Sigmoid colon (tissue), 7 donors: ENCODE measurements at regions of chr16 and their contacts with region 1.

Region 1: DNA sequence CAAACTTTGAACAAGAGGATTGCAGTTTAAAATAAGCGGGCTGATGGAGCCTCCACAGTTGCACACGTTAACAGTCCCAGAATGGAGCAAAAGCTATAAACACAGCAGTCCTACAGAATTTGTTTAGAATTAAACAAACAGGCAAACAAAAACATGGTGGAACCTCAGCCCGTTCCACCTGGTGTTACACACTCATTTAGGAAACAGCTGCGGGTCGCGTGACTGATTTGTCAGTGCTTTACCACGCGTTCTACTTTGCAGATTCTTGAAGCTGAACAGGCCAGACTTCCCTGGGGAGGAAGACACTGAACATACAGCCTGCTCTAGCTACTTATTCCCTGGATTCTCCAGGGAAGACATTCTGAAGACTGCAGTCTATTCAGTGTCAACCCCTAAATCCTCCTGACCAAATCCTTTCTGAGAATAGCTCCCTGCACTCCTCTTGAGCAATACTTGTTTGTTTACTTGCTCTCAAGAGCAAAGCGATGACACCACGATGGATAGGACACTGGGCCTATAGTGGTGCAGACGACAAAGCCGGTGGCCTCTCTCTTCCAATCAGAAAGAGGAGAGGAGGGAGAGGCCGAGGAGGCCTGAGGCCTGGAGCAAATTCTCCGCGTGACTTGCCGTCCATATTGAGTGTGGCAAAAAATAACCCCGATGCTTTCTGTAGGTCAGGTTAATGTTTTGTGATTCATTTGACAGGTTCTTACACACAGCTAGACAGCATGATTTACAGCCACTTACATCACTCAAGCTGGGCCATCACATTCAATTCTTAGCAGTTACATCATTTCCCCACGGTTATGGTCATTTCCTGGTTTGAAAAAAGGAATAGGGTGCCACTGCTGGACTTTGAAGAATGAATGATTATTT is 4.0 kb upstream of the MAP1LC3B start:
- DNase-seq: peak; percentile 98
- H3K4me3 ChIP-seq: peak overlapping the region in 2 of 4 donors; percentile 13 to 18
- H3K27ac ChIP-seq: peak overlapping the region; percentile 88 to 100 (median 95)
- H3K4me1 ChIP-seq: peaks cover 0 to 44% (median 36%) of the 10 kb centered on the region in 4 donors
- H3K27me3 ChIP-seq: no peaks in the 10 kb centered on the region
- CTCF ChIP-seq: no peak
- EP300 ChIP-seq: peak in 3 of 4 donors; percentile 65 to 81 (median 69)
- POLR2A ChIP-seq: peak; percentile 9 to 44

Region 2: GRCh38 chr16:86554917-86555703 is 833.1 kb before region 1 on chr16 and contains the start of gene MTHFSD:
- intact Hi-C with region 1: loop called (anchors 10 kb)
- DNase-seq: peak; percentile 96
- H3K4me3 ChIP-seq: peak within 1 kb of the TSS; percentile 69 to 85 (median 70)
- H3K27ac ChIP-seq: peak within 1 kb of the TSS; percentile 84 to 86 (median 84)
- H3K4me1 ChIP-seq: peaks cover 2 to 22% (median 13%) of the 10 kb centered on the region in 4 donors
- H3K27me3 ChIP-seq: peaks cover 0 to 17% (median 8%) of the 10 kb centered on the region in 3 donors
- CTCF ChIP-seq: no peak
- EP300 ChIP-seq: peak in 1 of 4 donors; percentile 58
- POLR2A ChIP-seq: peak; percentile 58
- total RNA-seq, gene MTHFSD: 10.7 to 18.8 (median 11.9) TPM

Region 3: DNA sequence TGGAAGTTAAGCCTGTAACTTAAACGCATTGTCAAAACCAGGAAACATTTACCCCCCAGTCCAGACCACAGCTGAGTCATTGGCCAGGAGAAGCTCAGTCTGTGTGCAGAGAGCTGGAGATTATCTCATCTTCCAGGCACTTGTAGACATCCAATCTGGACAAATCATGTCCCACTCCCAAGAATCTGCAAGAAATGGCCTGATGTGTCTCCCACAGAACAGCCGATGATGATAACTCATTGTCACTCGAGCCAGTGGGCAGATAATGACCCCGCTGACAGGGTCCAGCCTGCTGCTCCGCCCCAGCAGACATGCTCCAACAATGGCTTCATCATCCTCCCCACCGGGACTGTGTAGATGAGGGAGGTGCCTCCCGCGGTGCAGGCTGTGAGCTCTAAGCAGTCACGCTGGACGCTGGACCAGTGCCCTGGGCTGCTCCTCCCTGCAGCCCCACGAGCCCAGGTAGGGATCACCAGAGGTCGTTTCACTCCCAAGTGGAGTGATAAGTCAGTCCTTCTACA is 393.5 kb before region 1 on chr16:
- intact Hi-C with region 1: no loop called
- DNase-seq: peak; percentile 45
- H3K4me3 ChIP-seq: no peak overlapping the region
- H3K27ac ChIP-seq: no peak overlapping the region
- H3K4me1 ChIP-seq: no peaks in the 10 kb centered on the region
- H3K27me3 ChIP-seq: peaks cover 3 to 80% (median 38%) of the 10 kb centered on the region in 3 donors
- CTCF ChIP-seq: no peak
- EP300 ChIP-seq: no peak
- POLR2A ChIP-seq: no peak

Region 4: GRCh38 chr16:87288753-87289362 is 99.3 kb before region 1 on chr16:
- intact Hi-C with region 1: no loop called
- DNase-seq: no peak
- H3K4me3 ChIP-seq: no peak overlapping the region
- H3K27ac ChIP-seq: no peak overlapping the region
- H3K4me1 ChIP-seq: no peaks in the 10 kb centered on the region
- H3K27me3 ChIP-seq: no peaks in the 10 kb centered on the region
- CTCF ChIP-seq: no peak
- EP300 ChIP-seq: no peak
- POLR2A ChIP-seq: no peak

Region 5: GRCh38 chr16:87461466-87461991 is 73.3 kb after region 1 on chr16:
- intact Hi-C with region 1: loop called (anchors 5 kb)
- DNase-seq: peak; percentile 81
- H3K4me3 ChIP-seq: no peak overlapping the region
- H3K27ac ChIP-seq: peak overlapping the region in 3 of 4 donors; percentile 25 to 43 (median 30)
- H3K4me1 ChIP-seq: peaks cover 0 to 63% (median 55%) of the 10 kb centered on the region in 4 donors
- H3K27me3 ChIP-seq: no peaks in the 10 kb centered on the region
- CTCF ChIP-seq: peak in 1 of 4 experiments; percentile 28
- EP300 ChIP-seq: no peak
- POLR2A ChIP-seq: no peak